Activated naive CD4-positive, alpha-beta T cell treated with anti-CD3 and anti-CD28 coated beads for 36 hours (primary cell): ENCODE measurements at regions of chr3 and their contacts with region 1.

Region 1: GRCh38 chr3:52820736-52821135 is 9.7 kb downstream of the ITIH4 start:
- DNase-seq: peak; percentile 50
- H3K4me3 Mint-ChIP-seq: no peak overlapping the region
- H3K27ac Mint-ChIP-seq: no peak overlapping the region
- H3K4me1 Mint-ChIP-seq: no peaks in the 10 kb centered on the region
- H3K27me3 Mint-ChIP-seq: no peaks in the 10 kb centered on the region

Region 2: GRCh38 chr3:52507359-52507758 is 313.4 kb before region 1 on chr3:
- CTCF ChIA-PET with region 1: no interaction called
- intact Hi-C with region 1: no loop called
- DNase-seq: no peak
- H3K4me3 Mint-ChIP-seq: no peak overlapping the region
- H3K27ac Mint-ChIP-seq: no peak overlapping the region
- H3K4me1 Mint-ChIP-seq: no peaks in the 10 kb centered on the region
- H3K27me3 Mint-ChIP-seq: no peaks in the 10 kb centered on the region

Region 3: GRCh38 chr3:52663098-52663497 is 157.6 kb before region 1 on chr3:
- CTCF ChIA-PET with region 1: no interaction called
- intact Hi-C with region 1: no loop called
- DNase-seq: no peak
- H3K4me3 Mint-ChIP-seq: no peak overlapping the region
- H3K27ac Mint-ChIP-seq: no peak overlapping the region
- H3K4me1 Mint-ChIP-seq: no peaks in the 10 kb centered on the region
- H3K27me3 Mint-ChIP-seq: no peaks in the 10 kb centered on the region

Region 4: DNA sequence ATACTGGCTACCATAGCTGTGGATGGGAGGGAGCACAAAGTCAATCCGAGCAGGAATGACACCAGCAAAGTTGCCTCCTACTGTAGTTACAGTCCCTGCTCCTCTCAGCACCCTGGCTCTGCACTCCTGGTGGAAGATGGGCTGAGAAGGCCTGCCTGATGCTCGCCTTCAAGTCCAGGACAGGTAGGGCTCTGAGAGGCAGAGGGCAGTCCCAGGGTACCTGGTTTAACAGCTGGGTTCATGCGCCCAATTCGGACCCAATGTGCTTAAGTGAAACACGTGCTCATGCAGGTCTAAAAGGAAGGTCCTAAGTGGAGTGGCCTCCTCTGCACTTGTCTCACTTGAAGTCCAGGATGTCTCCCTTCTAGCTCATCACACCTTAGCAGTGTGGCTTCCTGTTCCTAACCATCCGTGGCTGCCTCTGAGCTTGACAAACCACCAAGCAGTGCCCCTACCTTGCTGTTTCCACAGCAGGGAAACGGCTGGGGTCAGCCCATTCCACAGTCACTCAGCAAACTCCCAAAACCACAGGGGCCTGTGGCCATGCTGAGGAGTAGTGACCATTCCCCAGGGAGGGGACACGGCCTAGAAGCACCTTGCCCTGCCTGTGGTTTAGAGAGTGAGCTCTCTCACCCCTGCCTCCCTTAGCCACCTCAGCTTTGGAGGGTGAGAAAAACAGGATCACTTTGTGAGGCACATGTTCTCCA is 18.0 kb after region 1 on chr3:
- CTCF ChIA-PET with region 1: interaction called, 12 read pairs
- intact Hi-C with region 1: no loop called
- DNase-seq: peak; percentile 24
- H3K4me3 Mint-ChIP-seq: no peak overlapping the region
- H3K27ac Mint-ChIP-seq: no peak overlapping the region
- H3K4me1 Mint-ChIP-seq: peaks cover 20% of the 10 kb centered on the region
- H3K27me3 Mint-ChIP-seq: no peaks in the 10 kb centered on the region

Region 5: DNA sequence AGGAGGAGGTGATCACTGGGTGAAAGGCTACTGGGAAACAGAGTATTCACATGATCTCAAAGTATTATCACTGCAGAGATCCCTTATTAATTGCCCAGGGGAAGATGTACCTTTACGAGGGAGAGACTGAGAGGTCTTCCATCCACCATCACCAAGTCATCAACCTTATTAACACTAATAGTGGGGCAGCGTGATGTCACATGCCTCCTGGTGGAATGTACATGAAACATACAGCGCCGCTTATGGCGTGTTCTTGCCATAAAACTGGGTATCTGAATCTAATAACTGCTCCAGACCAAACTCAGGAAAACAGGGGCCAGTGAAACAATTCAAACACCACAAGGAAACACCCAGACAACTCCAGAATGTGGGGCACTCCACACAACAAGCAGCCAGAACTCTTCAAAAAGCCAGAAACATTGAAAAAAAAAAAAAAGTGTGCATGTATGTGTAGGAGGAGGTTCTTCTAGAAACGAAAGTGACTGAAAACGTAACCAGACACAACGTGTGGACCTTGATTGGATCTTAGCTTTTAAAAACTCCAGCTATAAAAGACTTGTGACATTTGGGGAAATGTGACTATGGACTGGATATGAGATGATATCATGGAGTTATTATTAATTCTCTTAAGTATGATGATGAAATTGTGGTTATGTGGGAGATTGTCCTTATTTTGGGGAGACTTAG is 72.0 kb after region 1 on chr3:
- CTCF ChIA-PET with region 1: no interaction called
- intact Hi-C with region 1: no loop called
- DNase-seq: no peak
- H3K4me3 Mint-ChIP-seq: peak overlapping the region; percentile 17
- H3K27ac Mint-ChIP-seq: peak overlapping the region; percentile 10
- H3K4me1 Mint-ChIP-seq: peaks cover 61% of the 10 kb centered on the region
- H3K27me3 Mint-ChIP-seq: no peaks in the 10 kb centered on the region